Activated T-helper 2 cell treated with anti-CD3 and anti-CD28 coated beads, Interferon-gamma antibody, Interleukin-2, Interleukin-4, amounts not matched to agents 10 μg/mL and 5 μg/mL and 100 μg/mL, durations not matched to agents 14 hours and 24 hours and 36 hours (primary cell): ENCODE measurements at regions of chr1 and their contacts with region 1.

Region 1: DNA sequence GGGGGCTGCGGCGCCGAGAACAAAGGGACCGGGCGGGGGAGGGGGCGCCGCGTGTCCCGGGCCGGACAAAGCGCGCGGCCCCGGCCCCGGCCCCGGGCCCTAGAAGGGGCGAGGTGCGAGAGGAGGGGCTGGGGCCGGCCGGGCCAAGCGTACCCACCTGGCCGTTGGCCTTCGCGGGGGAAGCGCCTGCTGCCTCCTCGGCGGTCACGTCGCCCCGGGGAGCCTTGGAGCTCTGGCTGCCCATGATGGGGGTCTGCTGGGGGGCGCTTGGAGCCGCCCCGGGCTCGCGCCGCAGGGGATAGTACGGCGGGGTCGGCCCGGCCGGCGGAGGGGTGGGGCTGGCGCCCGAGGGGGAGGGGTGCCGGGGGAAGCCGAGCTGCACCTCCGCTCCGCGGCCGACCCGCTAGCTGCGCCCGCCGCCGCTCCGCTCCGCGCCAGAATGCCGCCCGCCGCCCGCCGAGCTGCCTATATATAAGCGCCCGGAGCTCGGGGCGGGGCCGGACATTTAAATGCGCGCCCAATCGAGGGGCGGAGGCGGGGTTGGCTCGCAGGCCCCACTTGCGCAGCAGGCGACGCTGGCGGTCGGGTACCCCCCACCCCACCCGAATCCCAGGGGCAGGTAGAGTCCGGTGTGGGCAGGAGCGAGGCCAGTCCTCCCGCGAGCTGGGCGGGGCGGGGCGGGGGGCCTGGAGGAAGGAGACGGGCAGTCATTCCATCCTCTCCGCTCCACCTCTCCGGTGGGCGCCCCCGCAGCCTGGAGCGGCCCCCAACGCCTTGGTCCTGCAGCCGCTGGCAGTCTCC is at the start of gene MARCKSL1:
- DNase-seq: peak; percentile 74
- H3K4me3 Mint-ChIP-seq: peak within 1 kb of the TSS; percentile 85
- H3K27ac Mint-ChIP-seq: peak within 1 kb of the TSS; percentile 67
- H3K4me1 Mint-ChIP-seq: peaks cover 35% of the 10 kb centered on the region
- H3K27me3 Mint-ChIP-seq: no peaks in the 10 kb centered on the region
- total RNA-seq, gene MARCKSL1: 42.5 and 45.0 TPM in 2 replicates

Region 2: DNA sequence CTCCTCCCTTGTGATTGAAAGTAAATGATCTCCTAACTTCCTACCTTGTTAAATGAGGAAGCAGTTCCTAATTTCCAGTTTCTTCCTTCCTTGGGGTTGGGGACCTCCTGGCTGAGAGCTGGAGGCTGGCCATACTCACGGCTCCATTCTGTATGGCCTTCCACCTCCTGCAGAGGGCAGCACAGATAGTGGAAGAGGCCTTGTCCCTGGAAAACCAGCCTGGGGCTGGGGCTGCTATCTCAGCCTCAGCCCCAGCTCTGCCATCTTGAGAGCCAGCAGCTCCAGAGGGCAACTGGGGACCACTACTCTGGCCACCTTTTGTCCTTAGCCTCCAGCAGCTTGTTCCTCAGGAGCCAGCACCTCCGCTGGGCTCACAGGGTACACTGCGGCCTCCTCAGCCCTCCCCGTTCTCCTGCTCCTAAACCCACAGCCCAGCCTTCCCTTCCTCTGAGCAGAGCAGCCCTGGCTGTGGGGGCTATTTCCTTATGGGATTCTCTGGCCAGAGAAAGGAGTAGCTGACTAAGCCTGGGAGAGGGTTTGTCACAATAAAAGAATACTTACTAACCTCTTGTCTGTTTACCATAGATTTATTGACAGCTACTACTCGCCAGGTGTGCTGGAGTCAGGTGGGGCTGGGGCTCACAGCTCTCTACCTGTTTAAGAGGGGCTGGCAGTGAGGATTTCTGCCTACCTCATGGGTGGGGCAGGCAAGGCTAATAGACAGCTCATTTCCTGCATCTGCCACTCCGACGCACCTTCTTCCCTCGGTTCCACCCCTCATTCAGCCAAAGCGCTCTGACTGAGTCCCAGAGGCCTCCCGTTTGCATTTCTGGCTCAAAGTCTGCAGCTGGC is 120.1 kb before region 1 on chr1:
- intact Hi-C with region 1: loop called (anchors 10 kb)
- DNase-seq: peak; percentile 53
- H3K4me3 Mint-ChIP-seq: no peak overlapping the region
- H3K27ac Mint-ChIP-seq: peak overlapping the region; percentile 28
- H3K4me1 Mint-ChIP-seq: peaks cover 13% of the 10 kb centered on the region
- H3K27me3 Mint-ChIP-seq: no peaks in the 10 kb centered on the region

Region 3: GRCh38 chr1:32247983-32248889 is 87.8 kb before region 1 on chr1:
- intact Hi-C with region 1: loop called (anchors 2 kb)
- DNase-seq: peak; percentile 74
- H3K4me3 Mint-ChIP-seq: peak overlapping the region; percentile 66
- H3K27ac Mint-ChIP-seq: peak overlapping the region; percentile 100
- H3K4me1 Mint-ChIP-seq: peaks cover 40% of the 10 kb centered on the region
- H3K27me3 Mint-ChIP-seq: no peaks in the 10 kb centered on the region

Region 4: DNA sequence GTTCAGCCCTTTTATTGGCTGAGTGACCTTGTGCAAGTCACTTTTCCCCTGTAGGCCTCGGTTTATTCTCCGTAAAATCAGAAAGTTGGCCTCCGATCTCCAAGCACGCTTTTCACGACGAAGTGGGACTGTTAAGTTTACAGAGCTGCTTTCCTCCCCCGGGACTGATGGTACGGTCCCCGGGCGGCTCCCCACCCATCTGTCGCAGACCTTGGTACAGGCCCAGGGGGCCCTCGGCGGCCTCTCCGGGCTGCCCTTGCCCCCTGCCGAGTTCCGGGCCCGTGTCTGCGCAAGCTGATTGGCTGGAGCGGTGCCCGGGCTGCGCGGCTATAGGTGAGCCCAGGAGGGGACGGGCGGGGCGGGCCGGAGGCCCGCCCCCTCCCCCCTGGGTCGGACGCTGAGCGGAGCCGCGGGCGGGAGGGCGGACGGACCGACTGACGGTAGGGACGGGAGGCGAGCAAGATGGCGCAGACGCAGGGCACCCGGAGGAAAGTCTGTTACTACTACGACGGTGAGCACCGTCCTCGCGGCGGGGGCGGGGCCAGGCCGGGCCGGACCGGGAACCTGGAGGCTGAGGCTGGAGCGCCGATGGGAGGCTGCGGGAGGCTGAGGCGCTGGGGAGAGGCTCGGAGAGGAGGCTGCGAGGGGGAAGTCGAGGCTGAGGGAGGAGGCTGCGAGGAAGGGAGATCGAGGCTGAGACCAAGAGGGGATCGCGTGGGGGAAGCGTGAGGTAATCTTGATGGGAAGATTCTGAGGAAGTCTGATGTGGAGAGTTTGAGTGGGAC is 44.1 kb before region 1 on chr1 and contains the start of gene HDAC1:
- intact Hi-C with region 1: loop called (anchors 5 kb)
- DNase-seq: peak; percentile 96
- H3K4me3 Mint-ChIP-seq: peak within 1 kb of the TSS; percentile 94
- H3K27ac Mint-ChIP-seq: peak within 1 kb of the TSS; percentile 99
- H3K4me1 Mint-ChIP-seq: peaks cover 34% of the 10 kb centered on the region
- H3K27me3 Mint-ChIP-seq: no peaks in the 10 kb centered on the region
- total RNA-seq, gene HDAC1: 179 and 195 TPM in 2 replicates

Region 5: DNA sequence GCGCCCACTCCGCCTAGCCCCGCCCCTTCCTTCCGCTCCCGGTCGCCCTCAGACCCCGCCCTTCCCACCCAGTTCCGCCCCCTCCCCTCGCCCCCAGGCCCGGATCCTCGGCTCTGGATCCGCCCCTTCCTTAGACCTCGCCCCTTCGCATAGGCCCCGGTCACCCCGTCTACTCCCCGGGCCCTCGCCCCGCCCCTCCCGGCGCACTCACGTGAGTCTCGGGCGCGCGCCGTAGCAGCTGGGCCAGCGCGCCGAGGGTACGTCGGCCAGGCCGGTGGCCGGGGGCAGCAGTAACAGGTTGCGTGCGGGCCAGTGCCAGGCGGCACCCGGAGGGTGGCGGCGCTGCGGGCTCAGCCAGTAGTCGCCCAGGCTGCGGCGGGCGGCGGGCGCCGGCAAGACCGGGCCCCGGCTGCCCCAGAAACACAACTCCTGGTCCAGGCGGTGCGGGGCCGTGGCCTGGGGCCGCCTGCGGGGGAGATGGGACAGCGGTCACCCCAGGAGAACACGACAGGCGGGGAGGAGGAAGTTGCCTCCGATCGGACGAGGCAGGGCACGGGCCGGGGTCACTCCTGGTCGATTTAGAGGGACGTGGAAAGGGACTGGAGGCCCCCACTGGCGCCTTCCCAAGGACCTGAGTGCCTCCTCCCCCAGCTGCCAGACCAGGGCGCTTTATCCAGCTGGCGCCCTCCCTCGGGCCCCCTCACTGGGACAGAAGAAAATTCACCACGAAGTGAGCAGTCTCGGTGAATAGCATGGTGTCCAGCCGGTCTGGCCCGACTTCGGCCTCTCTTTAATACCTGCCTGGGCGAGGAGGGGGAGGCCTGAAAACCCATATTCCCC is 15.6 kb after region 1 on chr1:
- intact Hi-C with region 1: loop called (anchors 1 kb)
- DNase-seq: peak; percentile 89
- H3K4me3 Mint-ChIP-seq: peak overlapping the region; percentile 78
- H3K27ac Mint-ChIP-seq: no peak overlapping the region
- H3K4me1 Mint-ChIP-seq: peaks cover 24% of the 10 kb centered on the region
- H3K27me3 Mint-ChIP-seq: no peaks in the 10 kb centered on the region

Region 6: DNA sequence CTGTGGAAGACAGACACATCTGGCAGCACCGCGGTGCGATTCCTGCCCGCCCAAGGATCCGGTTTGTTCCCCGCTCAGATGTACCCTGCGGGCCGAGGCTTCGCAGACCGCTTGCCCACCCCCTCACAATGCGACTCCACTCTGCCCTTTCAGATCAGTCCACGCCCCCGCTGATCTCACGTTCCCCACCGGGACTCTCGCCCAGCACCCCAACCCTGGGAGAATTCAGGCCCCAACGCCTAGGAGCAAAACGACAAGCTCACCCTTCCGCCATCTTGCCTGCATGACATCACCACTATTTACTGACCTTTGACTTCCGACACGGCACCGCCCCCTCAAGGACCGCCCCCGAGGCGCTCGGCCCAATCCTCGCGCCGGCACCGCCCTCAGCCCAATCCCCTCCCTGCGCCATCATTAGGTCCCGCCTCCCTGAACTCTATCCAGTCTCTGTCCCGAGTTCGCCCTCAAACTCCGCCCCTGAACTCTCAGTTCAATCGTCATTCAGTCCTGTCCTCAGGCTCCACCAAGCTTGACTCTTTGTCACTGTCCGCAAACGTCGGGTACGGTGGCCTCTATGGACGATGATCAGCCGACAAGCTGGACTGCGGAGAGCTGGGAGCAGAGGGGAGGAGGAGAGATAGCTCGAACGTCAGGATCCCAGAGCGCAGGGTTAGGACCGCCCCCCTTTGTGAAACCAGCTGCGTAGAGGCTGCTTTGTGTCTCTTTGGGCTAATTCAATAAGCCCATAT is 58.3 kb after region 1 on chr1 and contains the start of gene BSDC1:
- intact Hi-C with region 1: loop called (anchors 5 kb)
- DNase-seq: peak; percentile 98
- H3K4me3 Mint-ChIP-seq: peak within 1 kb of the TSS; percentile 99
- H3K27ac Mint-ChIP-seq: peak within 1 kb of the TSS; percentile 99
- H3K4me1 Mint-ChIP-seq: peaks cover 12% of the 10 kb centered on the region
- H3K27me3 Mint-ChIP-seq: peaks cover 10% of the 10 kb centered on the region
- total RNA-seq, gene BSDC1: 48.9 and 54.3 TPM in 2 replicates

Region 7: GRCh38 chr1:32413507-32414185 is 77.7 kb after region 1 on chr1:
- intact Hi-C with region 1: loop called (anchors 5 kb)
- DNase-seq: peak; percentile 63
- H3K4me3 Mint-ChIP-seq: no peak overlapping the region
- H3K27ac Mint-ChIP-seq: peak overlapping the region; percentile 26
- H3K4me1 Mint-ChIP-seq: peaks cover 3% of the 10 kb centered on the region
- H3K27me3 Mint-ChIP-seq: peaks cover 13% of the 10 kb centered on the region

Region 8: GRCh38 chr1:32448773-32449456 is 112.9 kb after region 1 on chr1:
- intact Hi-C with region 1: no loop called
- DNase-seq: no peak
- H3K4me3 Mint-ChIP-seq: no peak overlapping the region
- H3K27ac Mint-ChIP-seq: no peak overlapping the region
- H3K4me1 Mint-ChIP-seq: no peaks in the 10 kb centered on the region
- H3K27me3 Mint-ChIP-seq: peaks cover 33% of the 10 kb centered on the region

Region 9: DNA sequence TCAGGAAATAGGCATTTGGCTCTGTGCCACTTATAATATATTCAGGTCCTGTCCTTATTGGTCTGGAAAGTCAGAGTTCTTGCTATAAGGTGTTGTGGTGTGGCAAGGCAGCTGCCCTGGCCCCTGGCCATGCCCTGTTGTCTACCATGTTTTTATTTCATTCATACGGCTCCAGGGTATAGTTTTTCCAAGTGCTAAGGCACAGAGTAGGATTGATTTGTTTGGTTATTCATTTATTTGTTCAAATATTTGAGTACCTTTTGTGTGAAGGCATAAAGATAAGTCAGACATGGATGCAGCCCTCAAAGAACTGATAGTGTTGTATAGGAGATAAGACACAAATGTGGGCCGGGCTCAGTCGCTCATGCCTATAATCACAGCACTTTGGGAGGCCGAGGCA is 139.0 kb after region 1 on chr1:
- intact Hi-C with region 1: no loop called
- DNase-seq: no peak
- H3K4me3 Mint-ChIP-seq: no peak overlapping the region
- H3K27ac Mint-ChIP-seq: no peak overlapping the region
- H3K4me1 Mint-ChIP-seq: no peaks in the 10 kb centered on the region
- H3K27me3 Mint-ChIP-seq: peaks cover 6% of the 10 kb centered on the region